ENCODE measurements at regions of chr18 and their contacts with region 1.

Region 1: DNA sequence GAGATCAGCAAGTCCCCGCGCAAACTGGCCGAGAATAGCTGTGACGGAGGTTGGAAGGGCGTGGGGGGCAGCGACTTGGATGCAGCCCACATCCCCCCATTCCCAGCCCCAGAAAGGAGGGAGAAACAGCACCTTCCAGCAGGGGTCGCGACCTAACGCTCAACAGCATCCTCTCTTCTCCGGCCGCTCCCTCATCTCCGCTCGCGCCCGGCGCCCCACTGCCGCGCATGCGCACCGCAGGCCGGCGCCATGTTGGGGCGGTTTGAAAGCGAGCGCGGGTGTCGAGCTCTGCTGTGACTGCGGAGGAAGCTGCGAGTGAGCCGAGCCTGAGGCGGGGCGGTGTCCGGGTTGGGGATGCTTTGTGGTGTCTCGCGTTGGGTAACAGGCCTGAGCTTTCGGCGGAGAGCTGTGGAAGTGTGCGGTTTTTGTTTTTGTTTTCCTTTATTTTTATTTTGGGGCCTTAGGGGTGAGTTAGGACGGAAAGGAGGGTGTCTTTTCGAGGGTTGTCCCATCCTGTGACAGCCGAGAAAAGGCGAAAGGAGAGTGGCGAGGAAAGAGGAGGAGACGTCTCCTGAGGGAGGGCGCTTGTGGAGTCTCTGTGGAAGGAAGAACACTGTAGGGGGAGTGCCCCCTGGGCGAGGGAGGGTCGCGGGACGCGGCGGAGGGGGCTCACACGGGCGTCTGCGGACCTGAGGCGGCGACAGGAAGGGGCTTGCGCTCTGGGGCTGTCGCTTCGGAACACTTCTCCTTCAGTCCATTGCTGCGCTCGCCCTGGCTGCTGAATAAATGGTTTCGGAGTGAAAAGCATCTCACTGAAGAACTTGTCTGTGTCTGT is at the starts of genes C18orf54 and STARD6:
- DNase-seq: peak; percentile 92
- H3K4me3 Mint-ChIP-seq: peak within 1 kb of the TSS; percentile 95
- H3K27ac Mint-ChIP-seq: peak within 1 kb of the TSS; percentile 91
- H3K4me1 Mint-ChIP-seq: peaks cover 31% of the 10 kb centered on the region
- H3K27me3 Mint-ChIP-seq: no peaks in the 10 kb centered on the region
- total RNA-seq, gene C18orf54: 12.3 to 14.5 TPM
- total RNA-seq, gene STARD6: not detected

Region 2: DNA sequence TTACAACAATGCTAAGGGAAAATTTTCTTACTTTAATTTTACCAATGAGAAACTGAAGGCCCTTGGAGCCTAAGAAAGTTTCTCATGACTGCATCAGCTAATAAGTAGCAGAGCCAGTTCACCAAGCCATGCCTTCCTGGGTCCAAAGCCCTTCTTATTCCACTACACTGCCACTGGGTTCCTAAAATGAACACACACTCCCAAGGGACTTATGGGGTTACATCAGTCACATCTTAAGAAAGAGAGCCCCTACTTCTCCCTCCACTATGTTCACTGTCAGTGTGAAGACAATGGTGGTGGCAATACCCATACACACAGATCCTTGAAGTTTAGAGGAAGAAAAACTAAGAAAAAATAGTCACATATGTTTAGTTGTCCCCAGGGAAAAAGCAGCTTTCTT is 154.0 kb before region 1 on chr18:
- CTCF ChIA-PET with region 1: no interaction called
- POLR2A ChIA-PET with region 1: no interaction called
- DNase-seq: no peak
- H3K4me3 Mint-ChIP-seq: no peak overlapping the region
- H3K27ac Mint-ChIP-seq: no peak overlapping the region
- H3K4me1 Mint-ChIP-seq: peaks cover 23% of the 10 kb centered on the region
- H3K27me3 Mint-ChIP-seq: no peaks in the 10 kb centered on the region

Region 3: GRCh38 chr18:54261894-54262293 is 96.0 kb before region 1 on chr18:
- CTCF ChIA-PET with region 1: interaction called, 5 read pairs
- POLR2A ChIA-PET with region 1: interaction called, 13 read pairs
- DNase-seq: no peak
- H3K4me3 Mint-ChIP-seq: no peak overlapping the region
- H3K27ac Mint-ChIP-seq: peak overlapping the region; percentile 86
- H3K4me1 Mint-ChIP-seq: peaks cover 55% of the 10 kb centered on the region
- H3K27me3 Mint-ChIP-seq: no peaks in the 10 kb centered on the region

Region 4: DNA sequence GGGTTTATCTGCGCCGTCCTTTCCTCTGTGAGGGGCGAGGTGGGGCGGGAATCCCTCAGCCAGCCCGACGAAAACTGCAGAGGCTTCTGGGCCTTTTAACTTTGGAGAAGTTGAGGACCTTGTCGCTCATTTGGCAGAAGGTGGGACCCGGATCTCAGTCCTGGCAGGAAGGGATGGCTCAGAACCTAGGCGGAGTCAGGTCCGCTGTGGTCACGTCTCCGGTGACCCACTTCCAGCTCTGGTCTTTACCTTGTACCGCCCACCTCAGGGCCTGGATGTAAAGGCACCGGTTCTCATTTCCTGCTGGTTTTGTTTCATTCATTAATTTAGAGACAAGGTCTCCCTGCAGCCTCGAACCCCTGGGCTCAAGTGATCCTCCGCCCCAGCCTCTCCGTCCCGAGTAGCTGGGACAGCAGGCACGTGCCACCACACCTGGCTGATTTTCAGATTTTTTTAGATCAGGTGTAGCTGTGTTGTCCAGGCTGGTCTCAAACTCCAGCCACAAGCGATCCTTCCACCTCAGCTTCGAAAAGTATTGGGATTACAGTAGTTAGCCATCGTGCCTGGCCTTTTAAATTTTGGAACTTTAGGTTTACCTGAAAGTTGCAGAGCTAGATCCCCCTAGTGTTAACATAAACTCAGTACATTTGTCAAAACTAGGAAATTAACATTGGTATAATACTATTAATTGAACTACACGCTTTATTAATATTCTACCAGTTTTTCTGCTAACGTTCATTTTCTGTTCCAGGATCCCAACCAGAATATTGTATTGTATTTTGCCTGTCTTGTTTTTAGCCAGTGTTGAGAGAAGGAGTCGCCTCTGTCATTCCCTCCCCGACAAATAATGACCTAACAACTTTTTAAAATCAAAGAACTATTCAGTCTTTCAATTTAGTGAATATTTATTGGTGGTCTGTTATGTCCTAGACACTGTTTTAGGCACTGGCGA is 87.7 kb before region 1 on chr18:
- CTCF ChIA-PET with region 1: interaction called, 22 read pairs
- POLR2A ChIA-PET with region 1: interaction called, 52 read pairs
- DNase-seq: peak; percentile 76
- H3K4me3 Mint-ChIP-seq: peak overlapping the region; percentile 81
- H3K27ac Mint-ChIP-seq: peak overlapping the region; percentile 89
- H3K4me1 Mint-ChIP-seq: peaks cover 39% of the 10 kb centered on the region
- H3K27me3 Mint-ChIP-seq: no peaks in the 10 kb centered on the region

Region 5: GRCh38 chr18:54284981-54285785 is 72.7 kb before region 1 on chr18:
- CTCF ChIA-PET with region 1: interaction called, 5 read pairs
- POLR2A ChIA-PET with region 1: interaction called, 10 read pairs
- DNase-seq: peak; percentile 79
- H3K4me3 Mint-ChIP-seq: no peak overlapping the region
- H3K27ac Mint-ChIP-seq: peak overlapping the region; percentile 80
- H3K4me1 Mint-ChIP-seq: peaks cover 24% of the 10 kb centered on the region
- H3K27me3 Mint-ChIP-seq: no peaks in the 10 kb centered on the region

Region 6: DNA sequence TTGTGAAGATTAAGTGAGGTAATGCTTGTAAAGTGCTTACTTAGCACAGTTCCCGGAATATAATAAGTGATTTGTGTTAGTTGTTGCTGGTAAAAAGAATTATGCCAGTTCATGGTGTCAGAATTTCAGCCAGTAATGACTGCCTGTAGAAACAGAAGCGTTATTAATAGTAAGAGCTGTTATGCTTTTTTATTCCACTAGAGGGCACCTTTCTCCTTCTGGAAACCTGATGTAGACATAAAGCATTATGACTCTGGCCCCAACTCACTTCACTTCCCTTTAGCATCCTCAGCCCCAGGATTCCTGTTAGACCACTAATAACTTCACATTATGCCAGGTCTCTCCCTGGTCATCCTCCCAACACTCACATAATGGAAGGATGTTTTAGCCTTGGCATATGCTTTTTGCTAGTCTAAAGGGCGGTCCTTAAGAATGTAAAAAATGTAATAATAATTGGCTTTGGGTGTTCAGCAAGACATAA is 34.7 kb after region 1 on chr18:
- CTCF ChIA-PET with region 1: interaction called, 12 read pairs
- POLR2A ChIA-PET with region 1: no interaction called
- DNase-seq: no peak
- H3K4me3 Mint-ChIP-seq: no peak overlapping the region
- H3K27ac Mint-ChIP-seq: no peak overlapping the region
- H3K4me1 Mint-ChIP-seq: peaks cover 28% of the 10 kb centered on the region
- H3K27me3 Mint-ChIP-seq: peaks cover 13% of the 10 kb centered on the region

Measured in activated CD4-positive, alpha-beta memory T cell treated with anti-CD3 and anti-CD28 coated beads, Interleukin-2, amount 10 ng/mL, durations not matched to agents 7 days and 5 days (primary cell).